ENCODE measurements at regions of chr6 and their contacts with region 1.

Region 1: GRCh38 chr6:157756708-157757429 is 66.2 kb upstream of the SNX9 start:
- DNase-seq: peak; percentile 91
- H3K4me3 Mint-ChIP-seq: peak overlapping the region; percentile 38
- H3K27ac Mint-ChIP-seq: peak overlapping the region; percentile 89
- H3K4me1 Mint-ChIP-seq: peaks cover 92% of the 10 kb centered on the region
- H3K27me3 Mint-ChIP-seq: no peaks in the 10 kb centered on the region

Region 2: GRCh38 chr6:157107915-157108651 is 648.8 kb before region 1 on chr6:
- CTCF ChIA-PET with region 1: no interaction called
- POLR2A ChIA-PET with region 1: no interaction called
- intact Hi-C with region 1: loop called (anchors 10 kb)
- DNase-seq: peak; percentile 27
- H3K4me3 Mint-ChIP-seq: no peak overlapping the region
- H3K27ac Mint-ChIP-seq: no peak overlapping the region
- H3K4me1 Mint-ChIP-seq: peaks cover 45% of the 10 kb centered on the region
- H3K27me3 Mint-ChIP-seq: no peaks in the 10 kb centered on the region

Region 3: GRCh38 chr6:157693867-157694266 is 63.0 kb before region 1 on chr6:
- CTCF ChIA-PET with region 1: no interaction called
- POLR2A ChIA-PET with region 1: no interaction called
- intact Hi-C with region 1: no loop called
- DNase-seq: no peak
- H3K4me3 Mint-ChIP-seq: no peak overlapping the region
- H3K27ac Mint-ChIP-seq: no peak overlapping the region
- H3K4me1 Mint-ChIP-seq: no peaks in the 10 kb centered on the region
- H3K27me3 Mint-ChIP-seq: peaks cover 5% of the 10 kb centered on the region

Region 4: GRCh38 chr6:157770946-157771345 is 14.1 kb after region 1 on chr6:
- CTCF ChIA-PET with region 1: interaction called, 12 read pairs
- POLR2A ChIA-PET with region 1: interaction called, 10 read pairs
- intact Hi-C with region 1: no loop called
- DNase-seq: no peak
- H3K4me3 Mint-ChIP-seq: no peak overlapping the region
- H3K27ac Mint-ChIP-seq: no peak overlapping the region
- H3K4me1 Mint-ChIP-seq: peaks cover 43% of the 10 kb centered on the region
- H3K27me3 Mint-ChIP-seq: peaks cover 7% of the 10 kb centered on the region

Region 5: GRCh38 chr6:157823001-157823527 is 66.2 kb after region 1 on chr6 and contains the start of gene SNX9:
- CTCF ChIA-PET with region 1: interaction called, 4 read pairs
- POLR2A ChIA-PET with region 1: interaction called, 5 read pairs
- intact Hi-C with region 1: loop called (anchors 1 kb)
- DNase-seq: peak; percentile 81
- H3K4me3 Mint-ChIP-seq: peak within 1 kb of the TSS; percentile 96
- H3K27ac Mint-ChIP-seq: peak within 1 kb of the TSS; percentile 99
- H3K4me1 Mint-ChIP-seq: peaks cover 38% of the 10 kb centered on the region
- H3K27me3 Mint-ChIP-seq: no peaks in the 10 kb centered on the region
- total RNA-seq, gene SNX9: 59.3 to 59.7 TPM

Region 6: GRCh38 chr6:157873735-157874344 is 117.0 kb after region 1 on chr6:
- CTCF ChIA-PET with region 1: interaction called, 172 read pairs
- POLR2A ChIA-PET with region 1: interaction called, 6 read pairs
- intact Hi-C with region 1: loop called (anchors 1 kb)
- DNase-seq: peak; percentile 92
- H3K4me3 Mint-ChIP-seq: no peak overlapping the region
- H3K27ac Mint-ChIP-seq: no peak overlapping the region
- H3K4me1 Mint-ChIP-seq: peaks cover 30% of the 10 kb centered on the region
- H3K27me3 Mint-ChIP-seq: no peaks in the 10 kb centered on the region

Region 7: DNA sequence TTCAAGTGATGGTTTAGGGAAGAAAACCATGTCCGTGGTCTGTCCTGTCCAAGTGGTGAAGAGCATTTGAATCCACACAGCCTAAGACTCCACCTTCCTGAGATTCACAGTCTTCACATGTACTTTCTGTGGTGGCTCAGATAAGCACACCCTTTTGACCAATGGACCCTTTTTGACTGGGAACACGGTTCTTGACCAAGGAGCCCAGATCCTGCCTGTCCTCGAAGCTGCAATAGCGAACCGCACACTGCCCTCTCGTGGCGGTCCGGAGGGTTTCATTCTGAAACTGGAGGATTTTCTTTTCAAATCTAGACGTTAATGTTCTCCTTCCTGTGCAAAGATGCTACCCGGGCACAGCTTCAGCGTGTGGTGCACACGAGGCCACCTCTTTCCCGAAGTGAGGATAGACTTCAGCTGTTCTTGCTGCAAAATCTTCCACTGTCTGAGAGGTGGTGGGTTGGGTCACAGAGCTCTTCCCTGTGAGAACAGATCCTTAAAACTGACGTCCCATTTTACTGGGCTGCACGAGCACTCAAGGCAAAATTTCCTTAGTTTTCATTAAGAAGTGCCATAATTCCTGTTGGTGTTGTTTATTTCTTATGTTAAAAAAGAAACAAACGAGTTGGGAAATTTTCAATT is 315.3 kb after region 1 on chr6:
- CTCF ChIA-PET with region 1: interaction called, 10 read pairs
- POLR2A ChIA-PET with region 1: no interaction called
- intact Hi-C with region 1: loop called (anchors 2 kb)
- DNase-seq: peak; percentile 80
- H3K4me3 Mint-ChIP-seq: no peak overlapping the region
- H3K27ac Mint-ChIP-seq: peak overlapping the region; percentile 64
- H3K4me1 Mint-ChIP-seq: peaks cover 23% of the 10 kb centered on the region
- H3K27me3 Mint-ChIP-seq: no peaks in the 10 kb centered on the region

Region 8: GRCh38 chr6:158506577-158506976 is 749.7 kb after region 1 on chr6:
- CTCF ChIA-PET with region 1: no interaction called
- POLR2A ChIA-PET with region 1: no interaction called
- intact Hi-C with region 1: no loop called
- DNase-seq: no peak
- H3K4me3 Mint-ChIP-seq: no peak overlapping the region
- H3K27ac Mint-ChIP-seq: no peak overlapping the region
- H3K4me1 Mint-ChIP-seq: no peaks in the 10 kb centered on the region
- H3K27me3 Mint-ChIP-seq: no peaks in the 10 kb centered on the region

Measured in activated CD4-positive, alpha-beta memory T cell treated with anti-CD3 and anti-CD28 coated beads for 36 hours (primary cell).